ENCODE measurements at regions of chr19 and their contacts with region 1.

Region 1: DNA sequence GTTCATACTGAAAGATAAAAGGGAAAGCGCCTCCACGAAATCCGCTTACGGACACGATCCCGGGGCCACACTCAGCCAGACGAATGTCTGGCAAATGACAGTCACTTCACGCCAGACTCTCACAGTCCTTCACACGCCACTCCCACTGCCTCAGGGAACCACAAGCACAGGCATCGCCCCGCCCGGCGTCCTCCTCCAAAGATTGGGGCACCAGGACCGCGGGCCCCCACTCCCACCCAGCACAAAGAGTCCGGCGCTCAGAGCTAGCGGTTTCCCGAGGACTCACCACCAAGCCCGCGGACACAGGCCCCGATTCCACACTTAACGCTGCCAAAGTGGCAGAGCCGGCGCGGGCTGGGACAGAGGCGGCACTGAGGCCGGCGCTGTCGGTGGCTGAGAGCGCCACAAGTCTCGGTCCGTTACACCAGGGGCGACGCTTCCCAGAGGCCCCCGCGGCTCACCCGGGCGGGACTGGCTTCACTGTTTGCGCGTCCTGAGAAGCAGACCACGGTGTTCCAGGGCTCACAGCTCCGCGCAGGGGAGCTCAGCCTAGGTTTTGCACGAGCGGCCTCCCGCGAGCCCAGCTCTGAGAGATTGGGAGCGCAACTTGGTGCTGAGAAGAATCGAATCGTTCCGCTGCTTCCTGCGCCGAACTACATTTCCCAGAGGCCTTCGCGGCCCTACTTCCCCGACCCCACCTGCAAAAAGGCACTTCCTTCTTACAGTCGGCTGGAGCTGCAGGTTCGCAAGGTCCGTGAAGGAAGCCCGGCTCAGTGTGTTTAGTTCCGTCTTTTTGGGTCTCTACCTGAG is at the start of gene ZNF569:
- DNase-seq: peak; percentile 91
- H3K4me3 Mint-ChIP-seq: peak within 1 kb of the TSS; percentile 97
- H3K27ac Mint-ChIP-seq: peak within 1 kb of the TSS; percentile 95
- H3K4me1 Mint-ChIP-seq: peaks cover 41% of the 10 kb centered on the region
- H3K27me3 Mint-ChIP-seq: no peaks in the 10 kb centered on the region
- total RNA-seq, gene ZNF569: 6.4 to 7.6 TPM

Region 2: GRCh38 chr19:37313335-37313627 is 153.7 kb before region 1 on chr19:
- CTCF ChIA-PET with region 1: no interaction called
- POLR2A ChIA-PET with region 1: interaction called, 11 read pairs
- DNase-seq: no peak
- H3K4me3 Mint-ChIP-seq: peak overlapping the region; percentile 64
- H3K27ac Mint-ChIP-seq: peak overlapping the region; percentile 34
- H3K4me1 Mint-ChIP-seq: peaks cover 17% of the 10 kb centered on the region
- H3K27me3 Mint-ChIP-seq: no peaks in the 10 kb centered on the region

Region 3: DNA sequence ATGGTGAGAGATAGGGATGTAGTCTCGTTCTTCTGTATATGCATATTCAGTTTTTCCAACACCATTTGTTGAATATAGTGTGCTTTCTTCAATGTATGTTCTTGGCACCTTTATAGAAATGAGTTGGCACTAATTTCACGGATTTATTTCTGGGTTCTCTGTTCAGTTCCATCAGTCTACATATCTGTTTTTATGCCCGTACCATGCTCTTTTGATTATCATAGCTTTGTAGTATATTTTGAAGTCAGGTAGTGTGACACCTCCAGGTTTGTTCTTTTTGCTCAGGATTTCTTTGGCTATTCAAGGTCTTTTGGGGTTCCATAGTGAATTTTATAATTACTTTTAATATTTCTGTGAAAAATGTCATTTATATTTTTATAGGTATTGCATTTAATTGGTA is 25.2 kb after region 1 on chr19:
- CTCF ChIA-PET with region 1: no interaction called
- POLR2A ChIA-PET with region 1: no interaction called
- DNase-seq: no peak
- H3K4me3 Mint-ChIP-seq: no peak overlapping the region
- H3K27ac Mint-ChIP-seq: no peak overlapping the region
- H3K4me1 Mint-ChIP-seq: no peaks in the 10 kb centered on the region
- H3K27me3 Mint-ChIP-seq: no peaks in the 10 kb centered on the region

Region 4: DNA sequence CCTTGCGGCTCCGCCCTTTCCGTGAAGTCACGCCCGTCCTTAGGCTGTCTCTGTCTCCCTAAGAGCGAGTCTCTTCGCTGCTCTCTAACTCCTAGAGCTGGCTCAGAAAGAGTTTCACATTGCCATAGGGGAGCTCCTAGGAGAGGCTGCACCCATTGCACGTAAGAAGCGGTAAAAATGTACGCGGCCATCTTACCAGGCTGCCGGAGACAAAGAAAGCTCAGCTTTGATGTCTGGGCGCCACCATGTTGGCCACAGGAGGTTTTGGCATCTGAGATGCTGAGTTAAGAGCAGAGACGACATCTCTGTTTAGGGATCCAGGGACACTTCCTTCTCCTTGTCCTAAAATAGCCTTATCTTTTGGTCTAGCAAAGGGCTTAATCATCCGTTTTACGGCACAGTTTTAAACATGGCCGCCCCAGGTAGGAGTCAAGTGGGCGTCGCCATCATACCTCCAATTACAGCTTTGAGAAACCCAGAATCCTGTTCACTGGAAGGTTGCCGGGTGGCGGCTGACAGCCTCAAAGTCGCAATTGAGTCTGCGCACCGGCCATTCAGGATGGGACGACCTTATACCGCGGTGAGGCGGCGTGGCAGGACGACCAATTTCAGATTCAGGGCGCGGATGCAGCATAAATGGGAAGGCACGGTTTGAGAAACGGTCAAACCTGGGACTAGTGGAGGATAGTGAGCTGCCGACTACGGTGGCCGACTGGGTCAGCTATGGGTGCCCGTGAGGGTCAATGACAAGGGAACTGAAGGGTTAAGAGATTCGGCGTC is 39.6 kb after region 1 on chr19 and contains the start of gene ZNF793:
- CTCF ChIA-PET with region 1: interaction called, 3 read pairs
- POLR2A ChIA-PET with region 1: interaction called, 21 read pairs
- DNase-seq: peak; percentile 73
- H3K4me3 Mint-ChIP-seq: no peak within 1 kb of the TSS
- H3K27ac Mint-ChIP-seq: no peak within 1 kb of the TSS
- H3K4me1 Mint-ChIP-seq: no peaks in the 10 kb centered on the region
- H3K27me3 Mint-ChIP-seq: no peaks in the 10 kb centered on the region
- total RNA-seq, gene ZNF793: 2.1 to 2.3 TPM

Region 5: GRCh38 chr19:37537391-37537947 is 70.5 kb after region 1 on chr19:
- CTCF ChIA-PET with region 1: no interaction called
- POLR2A ChIA-PET with region 1: no interaction called
- DNase-seq: no peak
- H3K4me3 Mint-ChIP-seq: no peak overlapping the region
- H3K27ac Mint-ChIP-seq: no peak overlapping the region
- H3K4me1 Mint-ChIP-seq: no peaks in the 10 kb centered on the region
- H3K27me3 Mint-ChIP-seq: no peaks in the 10 kb centered on the region

Region 6: DNA sequence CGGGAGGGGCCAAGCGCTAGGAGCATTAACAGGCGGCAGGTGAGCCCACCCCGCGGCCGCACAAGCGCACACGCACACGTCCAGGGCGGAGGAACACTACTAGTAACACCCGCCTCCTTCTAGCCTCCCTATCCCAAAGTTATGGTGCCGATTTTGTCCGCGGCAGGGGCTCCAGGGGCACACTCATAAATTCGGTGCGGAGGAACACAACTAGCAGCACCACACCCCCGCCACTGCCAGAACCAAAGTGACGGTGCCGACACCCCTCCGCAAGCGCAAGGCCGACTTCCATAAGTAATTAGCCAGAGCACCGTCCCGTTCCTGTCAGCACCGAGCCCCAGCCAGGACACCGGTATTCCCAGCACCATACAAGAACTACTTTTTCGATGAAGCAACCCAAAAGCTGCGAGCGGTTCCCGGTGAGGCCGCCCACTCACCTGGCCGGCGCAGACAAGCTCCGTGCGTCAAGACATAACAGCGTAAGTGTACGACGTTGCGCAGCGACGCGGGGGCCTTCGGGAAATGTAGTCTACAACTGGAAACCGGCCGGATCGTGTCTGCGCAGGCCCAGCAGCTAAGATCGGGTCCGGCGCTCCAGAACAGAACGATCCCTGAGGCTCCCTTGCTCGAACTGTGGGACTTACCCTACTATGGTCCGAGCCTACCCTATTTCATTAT is 127.4 kb after region 1 on chr19 and contains the starts of genes ZNF540 and ZNF571:
- CTCF ChIA-PET with region 1: no interaction called
- POLR2A ChIA-PET with region 1: interaction called, 11 read pairs
- DNase-seq: peak; percentile 91
- H3K4me3 Mint-ChIP-seq: peak within 1 kb of the TSS; percentile 90
- H3K27ac Mint-ChIP-seq: peak within 1 kb of the TSS; percentile 80
- H3K4me1 Mint-ChIP-seq: peaks cover 17% of the 10 kb centered on the region
- H3K27me3 Mint-ChIP-seq: no peaks in the 10 kb centered on the region
- total RNA-seq, gene ZNF540: 1.4 to 1.5 TPM
- total RNA-seq, gene ZNF571: 1.5 to 2.9 TPM